ENCODE measurements at regions of chr7 and their contacts with region 1.

Region 1: DNA sequence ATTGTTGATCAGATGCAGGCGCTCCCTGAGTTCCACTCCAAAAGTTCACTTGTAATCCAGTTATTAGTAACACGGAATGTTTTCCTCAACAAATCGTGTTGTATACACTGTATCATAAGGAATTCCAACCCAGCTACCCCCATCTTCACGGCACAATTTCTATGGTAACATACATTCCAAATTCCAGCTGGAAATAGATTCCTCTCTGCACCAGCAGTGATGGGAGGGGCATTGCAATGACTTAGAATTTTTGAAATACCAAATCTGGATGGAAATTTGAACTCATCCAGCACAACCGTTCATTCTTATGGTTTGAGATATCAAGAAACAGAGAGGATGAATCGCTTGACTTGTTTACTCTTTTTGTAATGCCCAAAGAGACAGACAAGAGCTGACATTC is 38.9 kb upstream of the RHEB start:
- DNase-seq: no peak
- H3K4me3 ChIP-seq: no peak overlapping the region
- H3K27ac ChIP-seq: peak overlapping the region in 1 of 2 experiments; percentile 64; a peak in 1 of 4 replicates
- H3K4me1 ChIP-seq: no peaks in the 10 kb centered on the region
- H3K27me3 ChIP-seq: no peaks in the 10 kb centered on the region
- CTCF ChIP-seq: no peak
- EP300 ChIP-seq: no peak
- RAD21 ChIP-seq: no peak

Region 2: DNA sequence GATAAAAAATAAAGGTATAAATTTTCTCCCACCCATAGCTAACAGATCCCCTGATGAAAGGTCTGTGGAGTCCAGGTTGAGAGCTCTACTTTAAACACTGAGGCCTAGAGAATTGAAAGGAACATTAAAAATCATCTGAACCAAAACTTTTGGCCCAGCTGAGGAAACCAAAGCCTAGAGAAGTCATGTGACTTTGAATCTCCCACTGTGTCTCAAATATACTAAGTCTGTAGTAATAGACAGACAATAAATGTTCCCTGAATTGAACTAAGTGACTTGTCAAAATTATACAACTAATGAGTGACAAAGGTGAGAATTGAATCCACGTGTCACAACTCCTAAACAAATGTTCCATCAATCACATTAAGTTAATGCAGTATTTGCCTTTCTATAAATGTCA is 396.8 kb before region 1 on chr7:
- CTCF ChIA-PET with region 1: no interaction called
- POLR2A ChIA-PET with region 1: no interaction called
- DNase-seq: no peak
- H3K4me3 ChIP-seq: no peak overlapping the region
- H3K27ac ChIP-seq: no peak overlapping the region
- H3K4me1 ChIP-seq: peaks cover 0 to under 1% of the 10 kb centered on the region in 2 experiments; a peak in 1 of 4 replicates
- H3K27me3 ChIP-seq: peaks cover 42% of the 10 kb centered on the region
- CTCF ChIP-seq: no peak
- EP300 ChIP-seq: no peak
- RAD21 ChIP-seq: no peak

Region 3: DNA sequence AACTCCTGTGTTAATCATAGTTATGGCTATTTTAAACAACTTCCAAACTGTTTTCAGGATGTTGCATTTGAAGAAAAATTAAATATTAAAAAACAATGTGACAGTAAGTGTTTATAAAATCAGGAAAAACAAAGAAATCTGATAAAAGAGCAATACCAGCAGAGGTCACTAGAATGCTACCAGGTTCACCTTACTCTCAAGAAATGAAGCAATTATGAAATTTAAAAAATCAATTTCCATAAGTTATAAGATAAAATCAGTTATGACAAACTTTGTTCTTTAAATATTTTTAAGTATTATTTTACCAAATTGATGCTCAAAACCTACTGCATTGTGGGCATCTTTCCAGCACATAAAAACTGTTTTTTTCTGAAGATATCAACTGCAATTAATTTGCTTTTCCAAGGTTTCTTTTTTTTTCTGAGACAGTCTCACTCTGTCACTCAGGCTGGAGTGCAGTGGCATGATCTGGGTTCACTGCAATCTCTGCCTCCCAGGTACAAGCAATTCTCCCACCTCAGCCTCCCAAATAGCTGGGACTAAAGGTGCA is 11.9 kb after region 1 on chr7:
- CTCF ChIA-PET with region 1: interaction called, 17 read pairs
- POLR2A ChIA-PET with region 1: no interaction called
- DNase-seq: no peak
- H3K4me3 ChIP-seq: no peak overlapping the region
- H3K27ac ChIP-seq: no peak overlapping the region
- H3K4me1 ChIP-seq: peaks cover 2 to 4% of the 10 kb centered on the region in 2 experiments
- H3K27me3 ChIP-seq: no peaks in the 10 kb centered on the region
- CTCF ChIP-seq: peak; percentile 99
- EP300 ChIP-seq: no peak
- RAD21 ChIP-seq: peak; percentile 84